CD4-positive, alpha-beta memory T cell (primary cell): ENCODE measurements at regions of chr22 and their contacts with region 1.

Region 1: GRCh38 chr22:37608477-37609239 is at the start of gene GGA1:
- DNase-seq: peak; percentile 97 to 99 (median 98)
- H3K4me3 ChIP-seq: peak within 1 kb of the TSS; percentile 30 to 85
- H3K4me3 Mint-ChIP-seq: peak within 1 kb of the TSS; percentile 90 to 98 (median 94)
- H3K27ac ChIP-seq: peak within 1 kb of the TSS; percentile 88
- H3K27ac Mint-ChIP-seq: peak within 1 kb of the TSS; percentile 94 to 99 (median 98)
- H3K4me1 ChIP-seq: peaks cover 64% of the 10 kb centered on the region
- H3K4me1 Mint-ChIP-seq: peaks cover 35 to 68% (median 50%) of the 10 kb centered on the region in 4 donors
- H3K27me3 ChIP-seq: no peaks in the 10 kb centered on the region
- H3K27me3 Mint-ChIP-seq: no peaks in the 10 kb centered on the region
- total RNA-seq, gene GGA1: 108 to 109 TPM

Region 2: DNA sequence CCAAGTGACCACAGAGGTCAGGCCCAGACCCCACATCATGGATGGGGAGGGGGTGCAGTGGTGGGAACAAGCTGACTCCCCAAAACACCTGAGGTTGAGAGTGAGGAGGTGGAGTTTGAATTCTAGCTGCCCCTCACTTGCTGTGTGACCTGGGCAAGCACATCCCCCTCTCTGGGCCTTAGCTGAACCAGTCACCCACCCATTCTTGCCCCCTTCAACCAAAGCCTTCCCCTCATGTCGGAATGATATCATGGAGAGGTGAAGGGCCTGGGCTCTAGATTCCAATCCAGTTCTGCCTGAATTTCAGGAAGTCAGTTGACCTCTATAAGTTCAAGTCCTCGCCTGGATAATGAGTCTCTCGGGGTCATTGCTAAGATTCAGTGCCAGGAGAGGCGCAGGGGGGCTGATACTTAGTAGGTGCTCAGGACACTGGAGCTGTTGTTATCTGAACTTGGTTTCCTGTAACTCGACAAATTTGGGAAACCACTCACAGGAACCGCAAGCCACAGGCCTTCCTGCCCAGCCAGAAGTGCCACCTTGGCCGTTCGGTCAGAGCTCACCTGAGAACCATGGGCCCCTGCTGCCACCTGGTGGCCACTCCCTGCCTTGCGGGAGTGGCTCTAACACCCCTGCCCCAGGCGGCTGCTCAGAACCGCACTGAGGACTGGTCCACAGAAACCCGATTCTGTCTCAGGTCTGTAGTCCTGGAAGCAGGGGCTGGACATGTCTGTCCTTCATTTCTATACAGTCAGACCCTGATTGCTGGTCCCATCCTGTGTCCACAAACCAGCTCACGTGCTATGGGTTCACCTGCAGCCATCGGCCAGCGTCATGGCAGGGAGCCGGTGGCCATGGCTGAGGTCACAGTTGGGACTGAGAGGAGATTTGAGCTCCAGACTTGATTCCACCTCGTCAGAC is 41.5 kb before region 1 on chr22:
- CTCF ChIA-PET with region 1: interaction called, 12 read pairs
- POLR2A ChIA-PET with region 1: interaction called, 9 read pairs
- intact Hi-C with region 1: no loop called
- DNase-seq: peak; percentile 87 to 91 (median 89)
- H3K4me3 ChIP-seq: peak overlapping the region; percentile 6 to 15
- H3K4me3 Mint-ChIP-seq: peak overlapping the region; percentile 58 to 85 (median 70)
- H3K27ac ChIP-seq: no peak overlapping the region
- H3K27ac Mint-ChIP-seq: peak overlapping the region; percentile 8 to 81 (median 57)
- H3K4me1 ChIP-seq: peaks cover 23% of the 10 kb centered on the region
- H3K4me1 Mint-ChIP-seq: peaks cover 11 to 36% (median 25%) of the 10 kb centered on the region in 4 donors
- H3K27me3 ChIP-seq: peaks cover 11% of the 10 kb centered on the region
- H3K27me3 Mint-ChIP-seq: peaks cover 14 to 24% of the 10 kb centered on the region in 2 donors

Region 3: DNA sequence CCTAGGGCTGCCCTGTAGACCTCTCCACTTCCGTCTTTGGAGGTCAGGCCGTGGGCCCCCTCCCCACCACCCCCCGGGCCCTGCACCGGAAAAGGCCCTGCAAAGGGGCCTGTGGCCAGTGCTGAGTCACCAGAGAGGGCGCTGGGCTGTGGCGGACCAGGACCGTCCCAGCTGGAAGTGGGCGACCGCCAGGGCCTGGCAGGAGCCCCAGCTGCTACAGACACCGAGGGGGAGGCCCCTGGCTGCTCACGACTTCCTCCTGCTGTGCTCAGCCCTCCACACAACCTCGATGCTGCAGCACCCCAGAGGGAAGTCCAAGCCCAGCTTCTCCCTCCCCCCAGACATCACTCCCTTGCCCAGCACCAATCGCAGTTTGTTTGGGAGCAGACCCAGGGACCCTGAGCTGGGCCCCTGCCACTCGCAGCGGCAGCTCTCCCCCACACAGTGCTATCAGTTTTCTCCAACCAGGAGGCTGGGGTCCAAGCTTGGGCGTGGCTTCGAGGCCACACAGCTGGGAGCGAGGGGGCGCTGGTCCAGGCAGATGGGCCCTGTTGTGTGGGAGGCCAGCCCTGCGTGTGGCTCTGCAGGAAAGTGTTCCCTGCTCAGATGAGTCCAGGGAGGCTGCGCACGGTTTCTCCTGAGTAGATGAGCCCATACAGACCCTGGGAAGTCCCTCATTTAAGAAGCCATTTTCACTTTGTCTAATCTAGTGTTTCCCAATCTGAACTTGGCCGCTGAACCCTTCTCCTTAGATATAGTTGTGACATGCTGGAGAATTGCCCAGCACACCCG is 25.2 kb after region 1 on chr22:
- CTCF ChIA-PET with region 1: interaction called, 75 read pairs
- POLR2A ChIA-PET with region 1: interaction called, 94 read pairs
- intact Hi-C with region 1: loop called (anchors 1 kb)
- DNase-seq: peak; percentile 40 to 74 (median 49)
- H3K4me3 ChIP-seq: peak overlapping the region in 1 of 2 donors; percentile 16
- H3K4me3 Mint-ChIP-seq: peak overlapping the region; percentile 68 to 95 (median 80)
- H3K27ac ChIP-seq: peak overlapping the region; percentile 72
- H3K27ac Mint-ChIP-seq: peak overlapping the region; percentile 91 to 99 (median 95)
- H3K4me1 ChIP-seq: peaks cover 72% of the 10 kb centered on the region
- H3K4me1 Mint-ChIP-seq: peaks cover 40 to 76% (median 60%) of the 10 kb centered on the region in 4 donors
- H3K27me3 ChIP-seq: no peaks in the 10 kb centered on the region
- H3K27me3 Mint-ChIP-seq: no peaks in the 10 kb centered on the region

Region 4: GRCh38 chr22:37676736-37677492 is 68.3 kb after region 1 on chr22:
- CTCF ChIA-PET with region 1: interaction called, 136 read pairs
- POLR2A ChIA-PET with region 1: interaction called, 69 read pairs
- intact Hi-C with region 1: loop called (anchors 1 kb)
- DNase-seq: peak; percentile 92 to 97 (median 93)
- H3K4me3 ChIP-seq: peak overlapping the region; percentile 62 to 95
- H3K4me3 Mint-ChIP-seq: peak overlapping the region; percentile 88 to 99 (median 94)
- H3K27ac ChIP-seq: peak overlapping the region; percentile 87
- H3K27ac Mint-ChIP-seq: peak overlapping the region; percentile 96 to 100 (median 100)
- H3K4me1 ChIP-seq: peaks cover 48% of the 10 kb centered on the region
- H3K4me1 Mint-ChIP-seq: peaks cover 29 to 80% (median 46%) of the 10 kb centered on the region in 4 donors
- H3K27me3 ChIP-seq: no peaks in the 10 kb centered on the region
- H3K27me3 Mint-ChIP-seq: no peaks in the 10 kb centered on the region

Region 5: GRCh38 chr22:37807410-37808293 is 199.0 kb after region 1 on chr22 and contains the start of gene GCAT:
- CTCF ChIA-PET with region 1: no interaction called
- POLR2A ChIA-PET with region 1: interaction called, 3 read pairs
- intact Hi-C with region 1: loop called (anchors 5 kb)
- DNase-seq: peak; percentile 70 to 82 (median 75)
- H3K4me3 ChIP-seq: peak within 1 kb of the TSS; percentile 36 to 45
- H3K4me3 Mint-ChIP-seq: peak within 1 kb of the TSS; percentile 69 to 87 (median 78)
- H3K27ac ChIP-seq: no peak within 1 kb of the TSS
- H3K27ac Mint-ChIP-seq: peak within 1 kb of the TSS in 4 of 7 donors; percentile 32 to 47 (median 45)
- H3K4me1 ChIP-seq: peaks cover 50% of the 10 kb centered on the region
- H3K4me1 Mint-ChIP-seq: peaks cover 17 to 50% (median 37%) of the 10 kb centered on the region in 4 donors
- H3K27me3 ChIP-seq: peaks cover 20% of the 10 kb centered on the region
- H3K27me3 Mint-ChIP-seq: peaks cover 30% of the 10 kb centered on the region in 2 donors
- total RNA-seq, gene GCAT: 3.4 to 4.4 TPM

Region 6: GRCh38 chr22:37953437-37954179 is 344.9 kb after region 1 on chr22 and contains the starts of genes C22orf23 and POLR2F:
- CTCF ChIA-PET with region 1: no interaction called
- POLR2A ChIA-PET with region 1: no interaction called
- intact Hi-C with region 1: loop called (anchors 5 kb)
- DNase-seq: peak; percentile 94 to 96 (median 95)
- H3K4me3 ChIP-seq: peak within 1 kb of the TSS; percentile 72 to 91
- H3K4me3 Mint-ChIP-seq: peak within 1 kb of the TSS; percentile 96 to 100 (median 100)
- H3K27ac ChIP-seq: peak within 1 kb of the TSS; percentile 72
- H3K27ac Mint-ChIP-seq: peak within 1 kb of the TSS; percentile 76 to 100 (median 99)
- H3K4me1 ChIP-seq: peaks cover 20% of the 10 kb centered on the region
- H3K4me1 Mint-ChIP-seq: peaks cover 33 to 52% (median 40%) of the 10 kb centered on the region in 4 donors
- H3K27me3 ChIP-seq: peaks cover 3% of the 10 kb centered on the region
- H3K27me3 Mint-ChIP-seq: peaks cover 9 to 13% of the 10 kb centered on the region in 2 donors
- total RNA-seq, gene C22orf23: not detected
- total RNA-seq, gene POLR2F: 44.9 to 47.5 TPM